AG04449 (cell line): ENCODE measurements at regions of chr12 and their contacts with region 1.

Region 1: DNA sequence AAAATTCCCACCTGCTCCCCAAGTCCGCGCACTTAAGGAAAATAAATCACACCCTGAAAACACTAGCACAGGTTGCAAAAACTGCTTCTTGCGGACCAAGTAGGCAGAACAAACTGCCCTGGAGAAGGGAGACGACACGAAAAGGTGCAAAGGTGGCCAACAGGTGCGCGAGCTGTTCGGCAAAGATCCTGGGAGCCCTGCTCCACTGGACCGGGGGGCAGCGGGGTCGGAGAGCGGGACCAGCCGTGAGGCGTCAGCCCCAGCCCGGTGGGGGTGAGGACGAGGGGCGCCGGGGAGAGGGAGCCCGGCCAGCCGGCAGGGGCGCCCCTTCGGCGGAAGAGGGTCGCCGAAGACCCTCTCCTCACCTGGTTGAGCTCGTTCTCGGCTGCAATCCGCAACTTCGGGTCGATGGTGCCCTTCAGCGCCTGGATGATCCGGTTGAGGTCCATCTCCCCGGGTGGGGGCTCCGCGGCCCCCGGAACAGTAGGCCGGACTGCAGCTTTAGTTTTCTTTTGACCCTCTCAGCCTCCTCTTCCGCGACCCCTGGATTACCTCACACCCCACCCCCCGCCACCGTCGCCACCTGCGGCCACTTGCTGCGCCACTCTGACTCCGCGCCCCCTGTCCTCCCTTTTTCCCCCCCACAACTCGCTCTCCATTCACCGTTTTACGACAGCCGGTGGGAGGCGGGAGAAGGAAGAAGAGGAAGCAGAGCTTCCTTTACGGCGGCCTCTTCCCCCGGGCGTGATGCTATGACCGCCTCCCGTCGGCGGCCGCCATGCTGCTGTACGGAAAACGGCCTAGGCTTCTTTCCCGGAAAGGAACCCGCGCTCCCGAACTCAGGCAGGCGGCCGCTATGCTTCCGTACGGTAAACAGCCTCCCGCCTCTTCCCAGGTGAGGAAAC is at the start of gene IPO8:
- DNase-seq: no peak
- H3K4me3 ChIP-seq: peak within 1 kb of the TSS; percentile 93
- CTCF ChIP-seq: peak; percentile 55

Region 2: GRCh38 chr12:30795410-30796312 is 100.2 kb after region 1 on chr12:
- CTCF ChIA-PET with region 1: interaction called, 8 read pairs
- POLR2A ChIA-PET with region 1: interaction called, 24 read pairs
- DNase-seq: no peak
- H3K4me3 ChIP-seq: peak overlapping the region; percentile 72
- CTCF ChIP-seq: peak; percentile 20